Panc1 (cell line): ENCODE measurements at regions of chr4 and their contacts with region 1.

Region 1: GRCh38 chr4:78517050-78517652 is 34.4 kb upstream of the ANXA3 start:
- DNase-seq: no peak
- ATAC-seq: no peak
- H3K4me3 ChIP-seq: no peak overlapping the region
- H3K27ac ChIP-seq: no peak overlapping the region
- H3K4me1 ChIP-seq: no peaks in the 10 kb centered on the region
- H3K27me3 ChIP-seq: no peaks in the 10 kb centered on the region
- CTCF ChIP-seq: peak; percentile 45; the same call in 1 of the 2 replicates

Region 2: GRCh38 chr4:77959566-77960338 is 557.4 kb before region 1 on chr4:
- CTCF ChIA-PET with region 1: no interaction called
- POLR2A ChIA-PET with region 1: no interaction called
- in situ Hi-C with region 1: no loop called
- intact Hi-C with region 1: loop called (anchors 5 kb)
- DNase-seq: peak; percentile 18
- ATAC-seq: no peak
- H3K4me3 ChIP-seq: no peak overlapping the region
- H3K27ac ChIP-seq: no peak overlapping the region
- H3K4me1 ChIP-seq: no peaks in the 10 kb centered on the region
- H3K27me3 ChIP-seq: no peaks in the 10 kb centered on the region
- CTCF ChIP-seq: peak; percentile 61; the same call in 1 of the 2 replicates

Region 3: DNA sequence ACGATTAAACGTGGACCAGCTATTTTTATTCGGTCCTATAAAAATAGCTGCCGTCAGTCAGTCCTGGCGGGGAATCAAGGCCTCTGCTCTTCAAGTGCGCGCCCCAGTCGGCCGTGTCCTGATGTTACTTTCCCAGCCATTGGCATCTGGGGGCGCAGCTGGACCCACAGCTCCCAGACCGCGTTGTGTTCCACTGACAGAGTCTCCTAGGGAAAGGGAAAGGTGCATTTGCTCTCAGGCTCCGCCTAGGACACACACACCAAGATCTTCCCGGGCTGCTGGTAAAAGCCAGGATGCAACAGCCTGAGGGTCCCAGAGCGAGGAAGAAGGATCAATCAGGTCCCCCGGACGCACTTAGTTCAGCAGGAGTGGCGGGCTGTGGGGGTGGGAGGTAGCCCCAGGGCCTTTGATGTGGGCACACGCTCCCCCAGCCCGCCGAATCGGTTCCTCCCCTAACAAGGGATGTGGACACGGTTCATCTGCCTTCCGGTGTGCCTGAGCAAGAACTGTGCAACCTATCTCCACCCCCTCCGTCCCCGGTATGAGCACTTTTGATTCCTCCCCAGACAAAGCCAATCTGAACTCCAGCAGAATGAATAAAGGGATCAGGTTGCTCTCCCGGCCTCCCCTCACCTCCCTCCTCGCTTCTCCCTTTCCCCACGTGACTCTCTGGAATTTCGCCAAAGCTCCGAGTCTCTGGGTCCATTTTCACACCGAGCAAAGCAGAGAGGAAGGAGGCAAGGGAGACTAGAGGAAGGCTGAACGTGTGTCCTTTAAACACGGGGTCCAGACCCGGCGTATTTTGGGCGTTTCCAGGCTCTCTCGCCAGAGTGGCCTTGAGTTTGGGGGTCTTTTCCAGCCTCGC is 460.7 kb before region 1 on chr4:
- CTCF ChIA-PET with region 1: interaction called, 4 read pairs
- POLR2A ChIA-PET with region 1: no interaction called
- in situ Hi-C with region 1: no loop called
- intact Hi-C with region 1: loop called (anchors 5 kb)
- DNase-seq: no peak
- ATAC-seq: peak; percentile 61
- H3K4me3 ChIP-seq: peak overlapping the region; percentile 47 to 60
- H3K27ac ChIP-seq: no peak overlapping the region
- H3K4me1 ChIP-seq: peaks cover 3% of the 10 kb centered on the region; the same call in 1 of the 2 replicates
- H3K27me3 ChIP-seq: peaks cover 19% of the 10 kb centered on the region
- CTCF ChIP-seq: no peak